ENCODE measurements at regions of chrX and their contacts with region 1.

Region 1: GRCh38 chrX:124194199-124194598 is 138.3 kb upstream of the TEX13D start:
- DNase-seq: peak in 1 of 2 donors; percentile 44
- ATAC-seq: peak; percentile 67 to 85
- H3K4me3 ChIP-seq: peak overlapping the region in 2 of 4 donors; percentile 13 to 38
- H3K27ac ChIP-seq: peak overlapping the region; percentile 64 to 86 (median 79)
- H3K4me1 ChIP-seq: peaks cover 6 to 29% of the 10 kb centered on the region in 2 donors
- H3K27me3 ChIP-seq: no peaks in the 10 kb centered on the region
- CTCF ChIP-seq: no peak
- POLR2A ChIP-seq: no peak

Region 2: GRCh38 chrX:124098089-124098488 is 96.1 kb before region 1 on chrX:
- in situ Hi-C with region 1: no loop called
- intact Hi-C with region 1: loop called (anchors 10 kb)
- DNase-seq: no peak
- ATAC-seq: peak in 1 of 2 donors; percentile 39
- H3K4me3 ChIP-seq: no peak overlapping the region
- H3K27ac ChIP-seq: peak overlapping the region in 1 of 4 donors; percentile 15
- H3K4me1 ChIP-seq: no peaks in the 10 kb centered on the region
- H3K27me3 ChIP-seq: no peaks in the 10 kb centered on the region
- CTCF ChIP-seq: peak in 4 of 5 experiments; percentile 28 to 59 (median 48)
- POLR2A ChIP-seq: no peak

Measured in gastrocnemius medialis (tissue), 4 donors.